Caco-2 (cell line): ENCODE measurements at regions of chr15 and their contacts with region 1.

Region 1: GRCh38 chr15:98428253-98428989 is 219.9 kb upstream of the IGF1R start:
- DNase-seq: peak; percentile 54 to 81
- H3K4me3 ChIP-seq: peak overlapping the region; percentile 14; the same call in 1 of the 2 replicates
- H3K4me3 Mint-ChIP-seq: peak overlapping the region; percentile 52
- H3K27ac Mint-ChIP-seq: no peak overlapping the region
- H3K4me1 ChIP-seq: no peaks in the 10 kb centered on the region
- H3K4me1 Mint-ChIP-seq: no peaks in the 10 kb centered on the region
- H3K27me3 ChIP-seq: no peaks in the 10 kb centered on the region
- H3K27me3 Mint-ChIP-seq: peaks cover 8% of the 10 kb centered on the region
- CTCF ChIP-seq: peak; percentile 72 to 87

Region 2: GRCh38 chr15:98292442-98293240 is 135.8 kb before region 1 on chr15:
- CTCF ChIA-PET with region 1: no interaction called
- POLR2A ChIA-PET with region 1: no interaction called
- intact Hi-C with region 1: loop called (anchors 5 kb)
- DNase-seq: peak; percentile 61
- H3K4me3 ChIP-seq: no peak overlapping the region
- H3K4me3 Mint-ChIP-seq: no peak overlapping the region
- H3K27ac Mint-ChIP-seq: no peak overlapping the region
- H3K4me1 ChIP-seq: no peaks in the 10 kb centered on the region
- H3K4me1 Mint-ChIP-seq: no peaks in the 10 kb centered on the region
- H3K27me3 ChIP-seq: no peaks in the 10 kb centered on the region
- H3K27me3 Mint-ChIP-seq: peaks cover 7% of the 10 kb centered on the region
- CTCF ChIP-seq: peak; percentile 44 to 69